CD4-positive, alpha-beta memory T cell (primary cell): ENCODE measurements at regions of chr12 and their contacts with region 1.

Region 1: GRCh38 chr12:107670999-107671643 is 14.5 kb upstream of the PWP1 start:
- DNase-seq: peak in 1 of 5 donors; percentile 8
- H3K4me3 ChIP-seq: no peak overlapping the region
- H3K4me3 Mint-ChIP-seq: no peak overlapping the region
- H3K27ac ChIP-seq: no peak overlapping the region
- H3K27ac Mint-ChIP-seq: no peak overlapping the region
- H3K4me1 ChIP-seq: no peaks in the 10 kb centered on the region
- H3K4me1 Mint-ChIP-seq: peaks cover 2 to 7% (median 3%) of the 10 kb centered on the region in 4 donors
- H3K27me3 ChIP-seq: no peaks in the 10 kb centered on the region
- H3K27me3 Mint-ChIP-seq: peaks cover 9 to 16% of the 10 kb centered on the region in 2 donors

Region 2: GRCh38 chr12:107655281-107656065 is 15.6 kb before region 1 on chr12:
- CTCF ChIA-PET with region 1: interaction called, 10 read pairs
- POLR2A ChIA-PET with region 1: no interaction called
- intact Hi-C with region 1: no loop called
- DNase-seq: no peak
- H3K4me3 ChIP-seq: no peak overlapping the region
- H3K4me3 Mint-ChIP-seq: no peak overlapping the region
- H3K27ac ChIP-seq: no peak overlapping the region
- H3K27ac Mint-ChIP-seq: no peak overlapping the region
- H3K4me1 ChIP-seq: no peaks in the 10 kb centered on the region
- H3K4me1 Mint-ChIP-seq: no peaks in the 10 kb centered on the region
- H3K27me3 ChIP-seq: no peaks in the 10 kb centered on the region
- H3K27me3 Mint-ChIP-seq: no peaks in the 10 kb centered on the region

Region 3: GRCh38 chr12:107685360-107686248 is 14.5 kb after region 1 on chr12 and contains the start of gene PWP1:
- CTCF ChIA-PET with region 1: interaction called, 15 read pairs
- POLR2A ChIA-PET with region 1: interaction called, 6 read pairs
- intact Hi-C with region 1: no loop called
- DNase-seq: peak; percentile 94 to 97 (median 95)
- H3K4me3 ChIP-seq: peak within 1 kb of the TSS; percentile 94 to 98
- H3K4me3 Mint-ChIP-seq: peak within 1 kb of the TSS; percentile 96 to 99 (median 97)
- H3K27ac ChIP-seq: peak within 1 kb of the TSS; percentile 78
- H3K27ac Mint-ChIP-seq: peak within 1 kb of the TSS; percentile 94 to 100 (median 98)
- H3K4me1 ChIP-seq: peaks cover 25% of the 10 kb centered on the region
- H3K4me1 Mint-ChIP-seq: peaks cover 14 to 37% (median 26%) of the 10 kb centered on the region in 4 donors
- H3K27me3 ChIP-seq: no peaks in the 10 kb centered on the region
- H3K27me3 Mint-ChIP-seq: no peaks in the 10 kb centered on the region
- total RNA-seq, gene PWP1: 24.3 to 25.6 TPM

Region 4: DNA sequence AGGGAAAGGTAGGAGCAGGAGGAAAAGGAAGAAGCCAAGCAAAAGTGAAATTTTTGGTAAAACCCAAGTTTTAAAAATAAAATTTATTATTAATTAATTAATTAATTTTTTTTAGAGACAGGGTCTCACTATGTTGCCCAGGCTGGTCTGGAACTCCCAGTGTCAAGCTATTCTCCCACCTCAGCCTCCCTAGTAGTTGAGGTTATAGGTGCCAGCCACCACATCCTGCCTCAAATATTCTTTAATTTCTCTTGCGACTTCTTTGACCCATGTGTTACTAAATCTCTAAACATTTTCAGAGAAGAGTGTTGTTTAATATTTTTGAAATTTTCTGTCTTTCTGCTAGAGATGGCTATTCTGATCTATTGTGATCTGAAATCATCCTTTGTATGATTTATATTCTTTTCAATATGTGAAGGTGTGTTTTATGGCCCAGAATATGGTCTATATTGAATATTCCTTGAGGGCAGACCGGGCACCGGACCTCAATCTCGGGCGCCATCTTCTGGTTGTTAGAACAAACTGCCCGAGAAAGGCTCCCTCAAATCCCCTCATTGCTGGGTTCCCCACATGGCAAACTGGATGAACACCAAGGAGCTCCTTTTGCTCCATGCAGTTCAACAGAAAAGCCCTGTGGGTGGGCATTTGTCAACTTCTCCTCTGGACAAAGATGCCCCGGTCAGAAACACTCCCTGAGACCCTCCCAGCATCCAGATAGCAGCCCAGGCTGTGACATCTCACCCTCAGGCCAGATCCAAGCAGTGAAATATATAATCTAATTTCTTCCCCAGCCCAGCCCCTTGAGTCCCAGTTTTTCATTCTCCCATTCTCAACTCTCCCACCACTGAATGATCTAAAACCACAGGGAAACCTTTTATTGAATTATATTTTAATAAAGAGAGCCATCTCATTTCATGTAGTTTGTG is 213.9 kb after region 1 on chr12:
- CTCF ChIA-PET with region 1: interaction called, 14 read pairs
- POLR2A ChIA-PET with region 1: no interaction called
- intact Hi-C with region 1: no loop called
- DNase-seq: peak in 4 of 5 donors; percentile 6 to 21 (median 18)
- H3K4me3 ChIP-seq: no peak overlapping the region
- H3K4me3 Mint-ChIP-seq: no peak overlapping the region
- H3K27ac ChIP-seq: no peak overlapping the region
- H3K27ac Mint-ChIP-seq: peak overlapping the region in 2 of 7 donors; percentile 15 to 28
- H3K4me1 ChIP-seq: no peaks in the 10 kb centered on the region
- H3K4me1 Mint-ChIP-seq: peaks cover 0 to 2% (median 0%) of the 10 kb centered on the region in 4 donors
- H3K27me3 ChIP-seq: no peaks in the 10 kb centered on the region
- H3K27me3 Mint-ChIP-seq: peaks cover 6 to 21% of the 10 kb centered on the region in 2 donors